Calu3 (cell line): ENCODE measurements at regions of chr1 and their contacts with region 1.

Region 1: GRCh38 chr1:103941086-103941485 is 191.4 kb downstream of the AMY1C start:
- DNase-seq: no peak
- H3K4me3 Mint-ChIP-seq: no peak overlapping the region
- H3K27ac Mint-ChIP-seq: no peak overlapping the region
- H3K4me1 Mint-ChIP-seq: peaks cover 8% of the 10 kb centered on the region
- H3K27me3 Mint-ChIP-seq: no peaks in the 10 kb centered on the region
- CTCF ChIP-seq: no peak

Region 2: GRCh38 chr1:103084181-103084580 is 856.9 kb before region 1 on chr1:
- CTCF ChIA-PET with region 1: no interaction called
- intact Hi-C with region 1: no loop called
- DNase-seq: no peak
- H3K4me3 Mint-ChIP-seq: no peak overlapping the region
- H3K27ac Mint-ChIP-seq: no peak overlapping the region
- H3K4me1 Mint-ChIP-seq: no peaks in the 10 kb centered on the region
- H3K27me3 Mint-ChIP-seq: no peaks in the 10 kb centered on the region
- CTCF ChIP-seq: no peak

Region 3: GRCh38 chr1:103788377-103788776 is 152.7 kb before region 1 on chr1:
- CTCF ChIA-PET with region 1: no interaction called
- intact Hi-C with region 1: loop called (anchors 5 kb)
- DNase-seq: peak; percentile 1
- H3K4me3 Mint-ChIP-seq: no peak overlapping the region
- H3K27ac Mint-ChIP-seq: no peak overlapping the region
- H3K4me1 Mint-ChIP-seq: no peaks in the 10 kb centered on the region
- H3K27me3 Mint-ChIP-seq: no peaks in the 10 kb centered on the region
- CTCF ChIP-seq: no peak

Region 4: DNA sequence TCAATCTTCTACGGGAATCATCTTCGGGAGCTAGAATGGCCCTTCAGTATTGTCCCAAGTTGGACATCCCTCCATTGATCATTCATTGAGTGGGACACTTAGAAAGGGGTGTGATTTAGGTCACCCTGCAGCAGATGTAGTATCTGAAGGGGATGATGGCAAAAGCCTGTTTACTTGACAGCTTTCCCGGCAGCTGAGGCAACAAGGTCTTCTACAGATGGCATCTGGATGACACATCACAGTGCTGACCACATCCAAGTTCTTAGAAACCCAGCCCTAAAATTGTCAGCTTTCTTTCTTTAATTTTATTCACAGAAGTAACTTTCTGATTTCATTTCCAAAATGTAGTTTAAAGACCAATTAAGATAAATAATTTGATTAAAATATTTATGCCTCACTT is 41.1 kb before region 1 on chr1:
- CTCF ChIA-PET with region 1: no interaction called
- intact Hi-C with region 1: no loop called
- DNase-seq: no peak
- H3K4me3 Mint-ChIP-seq: no peak overlapping the region
- H3K27ac Mint-ChIP-seq: no peak overlapping the region
- H3K4me1 Mint-ChIP-seq: no peaks in the 10 kb centered on the region
- H3K27me3 Mint-ChIP-seq: no peaks in the 10 kb centered on the region
- CTCF ChIP-seq: no peak

Region 5: GRCh38 chr1:103997631-103998030 is 56.5 kb after region 1 on chr1:
- CTCF ChIA-PET with region 1: no interaction called
- intact Hi-C with region 1: loop called (anchors 5 kb)
- DNase-seq: no peak
- H3K4me3 Mint-ChIP-seq: no peak overlapping the region
- H3K27ac Mint-ChIP-seq: no peak overlapping the region
- H3K4me1 Mint-ChIP-seq: no peaks in the 10 kb centered on the region
- H3K27me3 Mint-ChIP-seq: no peaks in the 10 kb centered on the region
- CTCF ChIP-seq: no peak